PC-9 (cell line): ENCODE measurements at regions of chr20 and their contacts with region 1.

Region 1: DNA sequence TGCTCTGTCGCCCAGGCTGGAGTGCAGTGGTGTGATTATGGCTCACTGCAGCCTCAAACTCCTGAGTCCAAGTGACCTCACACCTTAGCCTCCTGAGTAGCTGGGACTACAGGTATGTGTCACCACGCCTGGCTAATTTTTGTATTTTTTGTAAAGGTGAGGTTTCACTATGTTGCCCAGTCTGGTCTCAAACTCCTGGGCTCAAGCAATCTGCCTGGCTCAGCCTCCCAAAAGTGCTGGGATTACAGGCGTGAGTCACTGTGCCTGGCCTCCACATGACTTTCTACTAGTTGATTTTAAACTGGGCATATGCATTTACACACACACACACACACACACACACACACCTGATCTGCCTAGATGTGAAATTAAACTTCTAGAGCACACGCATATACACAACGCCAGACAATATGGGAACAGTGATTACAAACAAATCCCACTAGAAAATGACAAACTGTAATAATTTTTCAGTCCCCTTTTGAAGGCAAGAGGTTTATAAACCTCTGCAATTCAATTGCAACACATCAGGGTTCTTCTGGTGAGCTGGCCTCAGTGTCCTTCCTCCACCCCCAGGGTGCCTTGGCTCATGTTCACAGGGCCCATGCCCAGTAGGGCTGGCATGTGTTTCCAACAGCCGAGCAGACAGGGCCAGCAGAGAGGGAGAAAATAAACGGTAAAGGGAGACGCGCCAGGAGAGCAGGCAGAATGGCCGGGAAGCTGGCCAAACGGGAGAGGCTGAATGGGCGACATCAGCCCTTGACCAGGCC is 31.2 kb downstream of the PARD6B start:
- DNase-seq: peak; percentile 50 to 72
- H3K4me3 ChIP-seq: peak overlapping the region; percentile 22; the same call in 1 of the 2 replicates
- H3K27ac ChIP-seq: peak overlapping the region; percentile 96
- H3K4me1 ChIP-seq: peaks cover 64% of the 10 kb centered on the region
- H3K27me3 ChIP-seq: no peaks in the 10 kb centered on the region
- CTCF ChIP-seq: no peak

Region 2: GRCh38 chr20:49562311-49563014 is 1200.2 kb before region 1 on chr20:
- CTCF ChIA-PET with region 1: no interaction called
- POLR2A ChIA-PET with region 1: no interaction called
- intact Hi-C with region 1: loop called (anchors 5 kb)
- DNase-seq: peak; percentile 86 to 92
- H3K4me3 ChIP-seq: peak overlapping the region; percentile 22; the same call in 1 of the 2 replicates
- H3K27ac ChIP-seq: peak overlapping the region; percentile 71
- H3K4me1 ChIP-seq: peaks cover 77% of the 10 kb centered on the region
- H3K27me3 ChIP-seq: no peaks in the 10 kb centered on the region
- CTCF ChIP-seq: no peak

Region 3: DNA sequence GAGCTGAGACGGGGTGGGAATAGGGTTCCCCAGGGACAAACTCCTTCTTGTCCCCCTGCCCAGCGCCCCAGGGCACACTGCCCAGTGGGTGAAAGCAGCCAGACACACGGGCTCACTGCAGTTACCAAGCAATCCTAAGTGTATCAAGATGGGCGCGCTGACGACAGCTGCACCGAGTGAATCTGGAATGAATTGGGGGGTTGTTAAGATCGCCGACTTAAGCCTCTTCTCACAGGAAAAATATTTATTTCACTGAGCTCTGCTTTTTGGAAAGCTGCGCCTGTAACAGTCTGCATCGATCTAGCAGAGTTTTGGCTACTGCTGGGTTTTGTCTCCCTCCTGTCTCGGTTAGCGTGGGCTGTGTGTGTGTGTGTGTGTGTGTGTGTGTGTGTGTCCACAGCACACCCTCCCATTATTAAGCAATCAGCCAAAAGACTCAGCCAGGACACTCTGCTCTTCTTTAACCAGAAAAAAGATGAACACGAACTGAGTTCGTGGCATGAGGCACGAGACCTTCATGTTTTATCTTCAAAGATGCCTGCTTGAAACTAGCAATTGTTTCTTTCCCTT is 107.2 kb before region 1 on chr20:
- CTCF ChIA-PET with region 1: no interaction called
- POLR2A ChIA-PET with region 1: interaction called, 9 read pairs
- intact Hi-C with region 1: loop called (anchors 1 kb)
- DNase-seq: no peak
- H3K4me3 ChIP-seq: no peak overlapping the region
- H3K27ac ChIP-seq: no peak overlapping the region
- H3K4me1 ChIP-seq: peaks cover 29% of the 10 kb centered on the region
- H3K27me3 ChIP-seq: no peaks in the 10 kb centered on the region
- CTCF ChIP-seq: no peak

Region 4: DNA sequence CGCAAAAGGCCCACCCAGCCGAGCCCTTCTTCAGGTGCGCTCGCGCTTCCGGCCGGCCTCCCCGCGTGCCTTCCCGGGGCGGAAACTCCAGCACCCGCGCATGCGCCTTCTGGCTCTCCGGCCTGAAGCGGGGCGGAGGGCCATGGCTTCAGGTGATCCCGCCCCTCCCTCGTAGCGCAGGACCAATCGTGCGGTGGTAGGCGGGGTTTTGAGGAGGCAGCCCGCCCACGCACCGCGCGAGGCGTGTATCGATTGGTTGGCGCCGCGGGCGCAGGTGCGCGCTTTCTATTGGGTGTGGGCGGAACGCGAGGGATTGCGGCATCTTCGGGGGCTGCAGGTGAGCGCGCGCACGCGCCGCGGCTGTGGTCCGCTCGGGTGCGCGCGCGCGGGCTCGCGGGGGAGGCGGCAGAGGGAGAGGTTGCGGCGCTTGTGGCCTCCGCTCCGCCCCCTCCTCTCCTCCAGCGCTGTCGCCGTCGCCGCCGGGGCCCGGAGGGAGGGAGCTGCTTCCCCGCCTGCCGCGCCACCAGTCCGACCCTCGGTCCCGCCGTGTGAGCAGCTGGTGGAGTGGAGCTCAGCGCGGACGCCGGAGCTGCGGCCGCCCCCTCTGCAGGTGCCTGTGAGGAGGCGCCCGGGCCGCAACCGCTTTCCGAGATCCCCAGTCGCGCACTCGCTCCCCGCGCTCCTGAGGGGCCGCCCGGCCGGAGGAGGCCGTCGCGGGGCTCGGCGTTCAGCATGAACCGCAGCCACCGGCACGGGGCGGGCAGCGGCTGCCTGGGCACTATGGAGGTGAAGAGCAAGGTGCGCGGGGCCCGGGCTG is 31.4 kb before region 1 on chr20 and contains the start of gene PARD6B:
- CTCF ChIA-PET with region 1: no interaction called
- POLR2A ChIA-PET with region 1: interaction called, 8 read pairs
- intact Hi-C with region 1: loop called (anchors 1 kb)
- DNase-seq: peak; percentile 96 to 100
- H3K4me3 ChIP-seq: peak within 1 kb of the TSS; percentile 85
- H3K27ac ChIP-seq: peak within 1 kb of the TSS; percentile 91
- H3K4me1 ChIP-seq: peaks cover 71% of the 10 kb centered on the region
- H3K27me3 ChIP-seq: no peaks in the 10 kb centered on the region
- CTCF ChIP-seq: no peak
- total RNA-seq, gene PARD6B: 52.2 and 80.3 TPM in 2 replicates

Region 5: DNA sequence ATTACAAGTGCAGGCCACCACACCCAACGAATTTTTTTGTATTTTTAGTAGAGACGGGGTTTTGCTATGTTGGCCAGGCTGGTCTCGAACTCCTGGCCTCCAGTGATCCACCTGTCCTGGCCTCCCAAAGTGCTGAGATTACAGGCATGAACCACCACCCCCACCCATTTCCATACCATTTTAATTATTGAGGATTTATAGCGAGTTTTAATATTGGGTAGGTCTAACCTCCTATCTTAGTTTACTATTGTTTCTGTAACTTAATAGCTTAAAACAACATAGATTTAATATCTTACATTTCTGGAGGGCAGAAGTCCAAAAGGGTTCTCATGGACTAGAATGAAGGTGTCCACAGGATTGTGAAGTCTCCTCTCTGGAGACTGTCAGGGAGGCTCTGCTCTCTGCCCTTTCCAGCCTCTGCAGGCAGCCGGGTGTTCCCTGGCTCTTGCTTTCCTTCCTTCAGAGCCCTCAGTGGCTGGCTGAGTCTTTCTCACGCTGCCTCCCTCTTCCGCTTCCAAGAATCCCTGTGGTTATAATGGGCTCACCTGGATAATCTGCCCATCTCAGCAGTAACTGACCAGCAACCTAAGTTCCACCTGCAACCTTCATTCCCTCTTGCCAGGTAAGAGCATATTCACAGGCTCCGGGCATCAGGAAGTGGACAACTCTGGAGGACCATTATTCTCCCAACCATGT is 13.7 kb after region 1 on chr20:
- CTCF ChIA-PET with region 1: interaction called, 12 read pairs
- POLR2A ChIA-PET with region 1: interaction called, 5 read pairs
- intact Hi-C with region 1: no loop called
- DNase-seq: no peak
- H3K4me3 ChIP-seq: no peak overlapping the region
- H3K27ac ChIP-seq: no peak overlapping the region
- H3K4me1 ChIP-seq: no peaks in the 10 kb centered on the region
- H3K27me3 ChIP-seq: no peaks in the 10 kb centered on the region
- CTCF ChIP-seq: no peak